Left cardiac atrium (tissue), 4 donors: ENCODE measurements at regions of chr1 and their contacts with region 1.

Region 1: DNA sequence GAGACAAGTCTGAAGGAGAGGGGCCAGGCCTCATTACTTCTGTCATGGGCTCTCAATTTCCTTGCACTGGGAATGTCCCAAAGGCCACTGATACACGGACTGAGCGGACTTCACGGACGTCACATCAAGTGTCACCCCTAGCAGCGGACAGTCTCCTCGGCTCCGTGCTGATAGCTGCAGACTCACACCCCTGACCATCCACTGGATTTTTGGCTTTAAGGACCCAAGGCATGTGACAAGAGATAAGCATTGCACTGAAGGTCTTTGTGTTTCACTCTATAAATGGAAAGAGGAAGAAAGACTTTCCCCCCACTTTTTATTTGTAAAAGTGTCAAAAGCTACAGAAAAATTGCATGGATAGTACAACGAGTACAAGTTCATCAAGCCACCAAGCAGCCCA is 200.4 kb upstream of the FGGY start:
- DNase-seq: peak; percentile 58
- ATAC-seq: peak; percentile 95 to 98

Region 2: DNA sequence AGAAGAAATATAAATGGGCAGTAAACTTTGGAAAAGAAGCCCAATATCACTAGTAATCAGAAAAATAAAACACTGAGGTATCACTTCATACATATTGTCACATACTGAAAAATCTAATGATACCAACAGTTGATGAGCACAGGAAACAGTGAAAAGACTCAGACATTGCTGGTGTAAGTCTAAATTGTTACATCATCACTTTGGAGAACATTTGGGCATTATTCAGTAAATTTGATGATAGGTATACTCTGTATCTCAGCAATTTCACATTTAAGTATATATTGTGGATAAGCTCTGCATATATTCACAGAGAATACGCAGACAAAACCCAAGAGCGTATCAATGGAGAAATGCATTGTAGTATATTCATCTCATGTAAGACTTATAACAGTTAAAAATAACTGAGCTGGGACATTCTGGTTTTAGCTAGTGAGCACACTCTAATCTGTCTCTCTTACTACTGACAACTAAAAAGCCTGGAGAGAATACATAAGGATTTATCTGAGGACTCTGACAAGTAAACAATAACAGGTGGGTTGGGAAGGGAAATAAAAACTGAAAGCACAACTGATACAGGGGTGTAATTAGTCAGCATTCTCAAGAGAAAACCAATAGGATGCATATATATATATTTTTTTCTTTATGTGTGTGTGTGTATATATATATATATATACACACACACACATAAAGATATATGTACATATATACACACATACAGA is 100.0 kb before region 1 on chr1:
- intact Hi-C with region 1: no loop called
- DNase-seq: no peak
- ATAC-seq: no peak

Region 3: GRCh38 chr1:59007820-59008598 is 88.5 kb before region 1 on chr1:
- intact Hi-C with region 1: no loop called
- DNase-seq: no peak
- ATAC-seq: peak; percentile 14 to 20

Region 4: DNA sequence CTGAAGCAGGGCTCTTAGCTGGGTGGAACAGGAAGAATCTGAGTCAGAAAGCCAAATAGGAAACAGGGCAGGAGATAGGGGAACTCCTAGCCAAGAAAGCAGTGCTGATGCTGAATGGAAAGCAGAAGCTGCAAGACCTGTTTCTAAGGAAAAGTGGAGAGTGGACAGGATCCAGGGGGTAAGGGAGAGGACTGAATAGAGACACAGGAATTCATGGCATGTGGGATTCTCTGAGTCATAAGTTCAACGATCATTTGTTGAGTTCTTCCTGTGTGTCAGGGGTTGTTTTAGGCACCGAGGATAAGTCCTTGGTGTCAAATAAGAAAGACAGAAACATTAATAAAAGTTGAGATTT is 46.6 kb after region 1 on chr1:
- intact Hi-C with region 1: loop called in 1 of 2 experiments (anchors 2 kb)
- DNase-seq: no peak
- ATAC-seq: peak; percentile 36 to 63

Region 5: GRCh38 chr1:59232216-59232615 is 135.7 kb after region 1 on chr1:
- intact Hi-C with region 1: no loop called
- DNase-seq: no peak
- ATAC-seq: no peak

Region 6: DNA sequence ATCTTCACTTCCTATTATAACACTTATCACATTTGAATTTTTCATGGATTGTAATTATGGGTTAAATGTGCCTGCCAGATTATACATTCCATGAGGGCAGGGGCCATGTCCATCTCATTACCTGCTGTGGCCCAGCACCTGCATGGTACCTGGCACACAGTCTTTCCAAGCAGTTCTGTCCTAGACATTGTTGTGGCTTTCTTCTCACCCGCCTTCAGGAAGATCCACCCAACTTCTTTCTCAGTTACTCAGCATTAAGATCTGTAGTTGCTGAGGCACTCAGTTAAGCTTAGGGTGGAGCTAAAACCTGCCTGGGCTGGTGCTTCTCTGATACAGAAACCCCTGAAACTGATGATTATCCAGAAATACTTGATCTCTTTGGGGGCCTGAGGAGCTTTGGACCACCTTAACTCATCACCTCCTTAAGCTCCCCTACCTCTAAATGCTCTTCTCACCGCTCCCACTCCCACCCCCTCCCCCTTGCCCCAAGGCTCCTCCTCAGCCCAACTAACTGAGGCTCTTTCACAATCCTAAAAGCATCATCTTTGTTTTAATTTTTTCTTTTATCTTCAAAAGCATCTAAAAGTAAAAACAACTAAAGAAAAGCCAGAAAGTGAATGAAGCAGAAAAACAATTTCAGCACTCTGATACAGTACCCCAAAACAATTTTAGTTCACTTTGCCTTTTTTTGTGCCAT is 391.0 kb after region 1 on chr1:
- intact Hi-C with region 1: no loop called
- DNase-seq: no peak
- ATAC-seq: peak in 1 of 2 donors; percentile 80